AG04450 (cell line): ENCODE measurements at regions of chr1 and their contacts with region 1.

Region 1: GRCh38 chr1:59738152-59738551 is 76.6 kb upstream of the HOOK1 start:
- DNase-seq: peak; percentile 90
- H3K4me3 ChIP-seq: no peak overlapping the region
- H3K27ac ChIP-seq: peak overlapping the region; percentile 97
- H3K27me3 ChIP-seq: no peaks in the 10 kb centered on the region
- CTCF ChIP-seq: no peak

Region 2: GRCh38 chr1:59707178-59707791 is 30.9 kb before region 1 on chr1:
- CTCF ChIA-PET with region 1: no interaction called
- POLR2A ChIA-PET with region 1: interaction called, 38 read pairs
- DNase-seq: peak; percentile 89
- H3K4me3 ChIP-seq: no peak overlapping the region
- H3K27ac ChIP-seq: peak overlapping the region; percentile 87
- H3K27me3 ChIP-seq: no peaks in the 10 kb centered on the region
- CTCF ChIP-seq: no peak